CD4-positive, alpha-beta memory T cell (primary cell): ENCODE measurements at regions of chr10 and their contacts with region 1.

Region 1: DNA sequence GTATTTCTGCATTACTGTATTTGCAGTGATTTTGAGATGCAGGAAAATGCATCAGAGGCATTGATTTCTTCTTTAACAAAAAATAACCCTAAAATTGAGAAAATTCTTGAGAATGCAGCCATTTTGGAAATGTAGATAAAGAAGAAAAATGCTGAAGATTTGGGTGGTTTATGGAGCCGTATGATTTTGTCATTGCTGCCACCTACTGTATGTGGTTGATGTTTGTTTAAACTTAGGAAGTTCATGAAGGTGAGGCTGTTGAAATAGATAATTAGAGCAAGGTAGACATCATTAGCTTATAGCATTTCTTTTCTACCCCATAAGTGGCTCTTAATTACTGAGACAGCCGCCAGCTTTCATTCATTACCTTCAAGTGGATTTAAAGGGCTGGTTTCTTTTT is 92.1 kb upstream of the SAMD8 start:
- DNase-seq: peak in 4 of 5 donors; percentile 17 to 43 (median 32)
- H3K4me3 ChIP-seq: no peak overlapping the region
- H3K4me3 Mint-ChIP-seq: no peak overlapping the region
- H3K27ac ChIP-seq: no peak overlapping the region
- H3K27ac Mint-ChIP-seq: peak overlapping the region in 2 of 7 donors; percentile 5 to 27
- H3K4me1 ChIP-seq: peaks cover 14% of the 10 kb centered on the region
- H3K4me1 Mint-ChIP-seq: peaks cover 19 to 34% (median 27%) of the 10 kb centered on the region in 4 donors
- H3K27me3 ChIP-seq: no peaks in the 10 kb centered on the region
- H3K27me3 Mint-ChIP-seq: no peaks in the 10 kb centered on the region

Region 2: DNA sequence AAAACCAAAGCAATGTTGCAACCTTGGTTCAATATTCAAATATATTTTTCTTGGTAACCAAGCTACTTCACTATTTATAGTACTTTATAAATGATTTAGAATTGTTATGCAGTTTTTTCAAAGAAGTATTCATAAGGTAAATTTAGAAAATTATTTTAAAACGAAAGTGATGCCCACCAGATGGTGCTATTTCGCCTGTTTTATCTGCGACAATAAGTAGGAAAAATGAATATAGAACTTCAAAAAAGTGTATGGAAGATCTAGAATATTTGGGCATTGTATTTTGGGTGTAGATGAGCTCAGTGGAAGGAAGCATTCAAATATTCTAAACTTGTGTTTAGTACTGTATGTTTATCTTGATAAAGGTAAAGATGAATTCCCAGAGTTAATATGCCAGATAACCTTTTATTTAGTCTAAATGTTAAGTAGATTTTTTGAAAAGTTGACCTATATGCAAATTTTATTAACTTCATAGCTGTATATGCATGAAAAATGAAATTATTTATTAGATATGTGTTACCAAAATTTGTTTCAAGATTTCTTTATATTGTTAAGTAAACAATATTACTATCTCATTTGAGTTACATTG is 775.2 kb before region 1 on chr10:
- CTCF ChIA-PET with region 1: interaction called, 20 read pairs
- POLR2A ChIA-PET with region 1: no interaction called
- intact Hi-C with region 1: loop called (anchors 5 kb)
- DNase-seq: peak in 4 of 5 donors; percentile 33 to 39 (median 37)
- H3K4me3 ChIP-seq: no peak overlapping the region
- H3K4me3 Mint-ChIP-seq: no peak overlapping the region
- H3K27ac ChIP-seq: no peak overlapping the region
- H3K27ac Mint-ChIP-seq: no peak overlapping the region
- H3K4me1 ChIP-seq: no peaks in the 10 kb centered on the region
- H3K4me1 Mint-ChIP-seq: peaks cover 0 to 9% (median 1%) of the 10 kb centered on the region in 4 donors
- H3K27me3 ChIP-seq: no peaks in the 10 kb centered on the region
- H3K27me3 Mint-ChIP-seq: no peaks in the 10 kb centered on the region

Region 3: DNA sequence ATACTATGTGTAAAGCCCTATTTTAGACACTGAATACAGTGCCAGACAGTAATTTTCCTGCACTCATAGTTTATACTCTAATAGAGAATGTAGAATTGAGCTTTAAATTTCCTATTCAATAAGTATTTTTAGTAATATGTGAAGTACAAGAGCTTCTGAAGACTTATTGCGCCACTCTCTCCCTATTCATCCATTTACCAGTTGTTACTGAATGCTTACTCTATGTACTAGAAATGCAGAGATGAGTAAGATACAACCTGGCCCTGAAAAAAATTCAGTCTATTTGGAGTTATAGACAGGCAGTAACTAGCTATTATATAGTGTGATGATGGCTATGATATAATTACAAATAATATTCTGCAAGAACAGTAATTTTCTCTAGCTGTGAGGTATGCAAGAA is 769.5 kb before region 1 on chr10:
- CTCF ChIA-PET with region 1: interaction called, 20 read pairs
- POLR2A ChIA-PET with region 1: no interaction called
- intact Hi-C with region 1: loop called (anchors 5 kb)
- DNase-seq: no peak
- H3K4me3 ChIP-seq: no peak overlapping the region
- H3K4me3 Mint-ChIP-seq: no peak overlapping the region
- H3K27ac ChIP-seq: no peak overlapping the region
- H3K27ac Mint-ChIP-seq: no peak overlapping the region
- H3K4me1 ChIP-seq: no peaks in the 10 kb centered on the region
- H3K4me1 Mint-ChIP-seq: peaks cover 0 to 5% (median 0%) of the 10 kb centered on the region in 4 donors
- H3K27me3 ChIP-seq: no peaks in the 10 kb centered on the region
- H3K27me3 Mint-ChIP-seq: no peaks in the 10 kb centered on the region

Region 4: DNA sequence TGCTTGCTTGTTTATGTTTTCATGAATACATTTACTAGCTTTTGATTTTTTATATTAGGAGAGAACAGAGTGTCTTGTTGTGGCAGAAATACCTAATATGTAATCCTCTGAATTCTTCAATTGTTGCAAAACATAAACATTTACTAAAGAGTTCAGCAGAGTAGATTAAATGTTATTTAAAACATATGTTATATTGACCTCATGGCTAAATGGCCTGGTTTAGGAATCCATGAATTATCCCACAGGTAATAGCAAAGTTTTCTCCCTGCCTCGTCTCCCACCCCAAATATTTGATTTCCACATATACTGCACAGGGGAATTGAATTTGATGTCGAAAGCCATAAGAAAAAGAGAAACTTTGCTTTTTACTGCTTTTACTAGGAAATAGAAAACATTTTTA is 756.5 kb before region 1 on chr10:
- CTCF ChIA-PET with region 1: interaction called, 12 read pairs
- POLR2A ChIA-PET with region 1: no interaction called
- intact Hi-C with region 1: loop called (anchors 1 kb)
- DNase-seq: no peak
- H3K4me3 ChIP-seq: no peak overlapping the region
- H3K4me3 Mint-ChIP-seq: no peak overlapping the region
- H3K27ac ChIP-seq: no peak overlapping the region
- H3K27ac Mint-ChIP-seq: peak overlapping the region in 2 of 7 donors; percentile 19 to 57
- H3K4me1 ChIP-seq: no peaks in the 10 kb centered on the region
- H3K4me1 Mint-ChIP-seq: peaks cover 0 to 12% (median 7%) of the 10 kb centered on the region in 4 donors
- H3K27me3 ChIP-seq: no peaks in the 10 kb centered on the region
- H3K27me3 Mint-ChIP-seq: no peaks in the 10 kb centered on the region

Region 5: GRCh38 chr10:74419958-74420375 is 599.4 kb before region 1 on chr10:
- CTCF ChIA-PET with region 1: interaction called, 7 read pairs
- POLR2A ChIA-PET with region 1: no interaction called
- intact Hi-C with region 1: loop called (anchors 1 kb)
- DNase-seq: peak in 4 of 5 donors; percentile 31 to 44 (median 40)
- H3K4me3 ChIP-seq: no peak overlapping the region
- H3K4me3 Mint-ChIP-seq: no peak overlapping the region
- H3K27ac ChIP-seq: no peak overlapping the region
- H3K27ac Mint-ChIP-seq: peak overlapping the region in 2 of 7 donors; percentile 4 to 20
- H3K4me1 ChIP-seq: no peaks in the 10 kb centered on the region
- H3K4me1 Mint-ChIP-seq: peaks cover 5 to 11% (median 6%) of the 10 kb centered on the region in 4 donors
- H3K27me3 ChIP-seq: no peaks in the 10 kb centered on the region
- H3K27me3 Mint-ChIP-seq: no peaks in the 10 kb centered on the region

Region 6: GRCh38 chr10:74738985-74739567 is 280.3 kb before region 1 on chr10:
- CTCF ChIA-PET with region 1: interaction called, 22 read pairs
- POLR2A ChIA-PET with region 1: no interaction called
- intact Hi-C with region 1: loop called (anchors 10 kb)
- DNase-seq: peak in 4 of 5 donors; percentile 23 to 36 (median 32)
- H3K4me3 ChIP-seq: no peak overlapping the region
- H3K4me3 Mint-ChIP-seq: peak overlapping the region in 6 of 8 donors; percentile 28 to 65 (median 49)
- H3K27ac ChIP-seq: no peak overlapping the region
- H3K27ac Mint-ChIP-seq: peak overlapping the region; percentile 63 to 89 (median 81)
- H3K4me1 ChIP-seq: peaks cover 14% of the 10 kb centered on the region
- H3K4me1 Mint-ChIP-seq: peaks cover 11 to 20% (median 17%) of the 10 kb centered on the region in 4 donors
- H3K27me3 ChIP-seq: no peaks in the 10 kb centered on the region
- H3K27me3 Mint-ChIP-seq: no peaks in the 10 kb centered on the region

Region 7: GRCh38 chr10:75223507-75223906 is 204.1 kb after region 1 on chr10:
- CTCF ChIA-PET with region 1: no interaction called
- POLR2A ChIA-PET with region 1: no interaction called
- intact Hi-C with region 1: no loop called
- DNase-seq: no peak
- H3K4me3 ChIP-seq: no peak overlapping the region
- H3K4me3 Mint-ChIP-seq: peak overlapping the region in 1 of 8 donors; percentile 10
- H3K27ac ChIP-seq: peak overlapping the region; percentile 33
- H3K27ac Mint-ChIP-seq: peak overlapping the region; percentile 8 to 77 (median 51)
- H3K4me1 ChIP-seq: peaks cover 37% of the 10 kb centered on the region
- H3K4me1 Mint-ChIP-seq: peaks cover 34 to 67% (median 48%) of the 10 kb centered on the region in 4 donors
- H3K27me3 ChIP-seq: no peaks in the 10 kb centered on the region
- H3K27me3 Mint-ChIP-seq: no peaks in the 10 kb centered on the region